Cardiac septum (tissue), 1 donor: ENCODE measurements at regions of chr5 and their contacts with region 1.

Region 1: DNA sequence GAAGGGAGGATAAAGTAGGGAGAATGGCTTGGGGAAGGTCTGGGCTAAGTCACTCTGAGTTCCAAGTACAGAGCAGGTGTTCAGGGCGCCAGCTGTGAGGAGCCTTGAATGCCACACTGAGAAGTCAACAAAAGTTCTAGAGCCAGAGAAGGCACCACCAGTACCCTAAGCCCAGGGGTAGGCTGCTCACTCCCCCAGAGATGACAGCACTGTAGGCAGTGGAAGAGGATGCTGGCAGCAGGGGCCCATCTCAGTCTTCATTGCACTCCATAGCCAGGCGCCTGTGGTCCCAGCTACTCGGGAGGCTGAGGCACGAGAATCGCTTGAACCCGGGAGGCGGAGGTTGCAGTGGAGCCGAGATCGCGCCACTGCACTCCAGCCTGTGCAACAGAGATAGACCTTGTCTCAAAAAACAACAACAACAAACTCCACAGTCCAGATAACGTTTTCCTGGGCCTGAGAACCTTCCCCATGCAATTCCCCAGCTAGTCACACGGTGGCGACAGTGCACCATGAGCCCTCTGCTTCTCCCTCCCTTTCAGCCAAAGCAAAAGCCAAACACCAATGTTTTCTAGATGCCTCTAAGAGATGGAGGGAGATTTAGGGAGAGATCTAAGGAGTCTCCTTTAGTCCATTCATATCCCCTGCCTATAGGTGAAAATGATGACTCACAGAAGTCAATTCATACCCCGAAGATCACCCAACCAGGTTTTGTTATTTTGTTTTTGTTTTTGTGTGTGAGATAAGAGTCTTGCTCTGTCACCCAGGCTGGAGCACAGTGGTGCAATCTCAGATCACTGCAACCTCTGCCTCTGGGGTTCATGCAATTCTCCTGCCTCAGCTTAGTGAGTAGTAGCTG is 19.8 kb upstream of the NSD1 start:
- DNase-seq: peak; percentile 90

Region 2: GRCh38 chr5:176660860-176661641 is 452.7 kb before region 1 on chr5:
- intact Hi-C with region 1: loop called (anchors 5 kb)
- DNase-seq: peak; percentile 89

Region 3: GRCh38 chr5:177071666-177072385 is 42.0 kb before region 1 on chr5:
- intact Hi-C with region 1: loop called (anchors 2 kb)
- DNase-seq: no peak

Region 4: GRCh38 chr5:177232761-177233160 is 119.0 kb after region 1 on chr5:
- intact Hi-C with region 1: loop called (anchors 5 kb)
- DNase-seq: no peak

Region 5: GRCh38 chr5:177303121-177303924 is 189.5 kb after region 1 on chr5 and contains the starts of genes PRELID1 and RAB24:
- intact Hi-C with region 1: loop called (anchors 5 kb)
- DNase-seq: peak; percentile 95
- total RNA-seq, gene PRELID1: 49.8 TPM
- total RNA-seq, gene RAB24: 19.0 TPM